ENCODE measurements at regions of chr18 and their contacts with region 1.

Region 1: GRCh38 chr18:74251297-74252038 is 40.3 kb downstream of the CYB5A start:
- DNase-seq: no peak
- ATAC-seq: peak in 1 of 4 donors; percentile 37
- H3K4me3 ChIP-seq: no peak overlapping the region
- H3K27ac ChIP-seq: peak overlapping the region in 2 of 12 donors; percentile 72 to 77
- H3K4me1 ChIP-seq: peaks cover 2 to 33% (median 24%) of the 10 kb centered on the region in 12 donors
- H3K27me3 ChIP-seq: no peaks in the 10 kb centered on the region
- CTCF ChIP-seq: no peak
- POLR2A ChIP-seq: no peak

Region 2: GRCh38 chr18:74291771-74292540 is 40.5 kb after region 1 on chr18 and contains the start of gene CYB5A:
- intact Hi-C with region 1: loop called in 3 of 10 experiments (anchors 5 to 10 kb)
- DNase-seq: peak; percentile 98 to 99 (median 99)
- ATAC-seq: peak; percentile 99 to 100 (median 99)
- H3K4me3 ChIP-seq: peak within 1 kb of the TSS; percentile 65 to 96 (median 87)
- H3K27ac ChIP-seq: peak within 1 kb of the TSS in 11 of 12 donors; percentile 35 to 89 (median 72)
- H3K4me1 ChIP-seq: peaks cover 0 to 40% (median 22%) of the 10 kb centered on the region in 12 donors
- H3K27me3 ChIP-seq: no peaks in the 10 kb centered on the region
- CTCF ChIP-seq: peak in 2 of 12 donors; percentile 10 to 26
- POLR2A ChIP-seq: peak in 1 of 2 donors; percentile 81
- total RNA-seq, gene CYB5A: 46.5 to 146 (median 83.3) TPM

Region 3: GRCh38 chr18:74331404-74331803 is 79.9 kb after region 1 on chr18:
- intact Hi-C with region 1: loop called in 1 of 10 experiments (anchors 5 kb)
- DNase-seq: no peak
- ATAC-seq: peak in 3 of 4 donors; percentile 61 to 78 (median 72)
- H3K4me3 ChIP-seq: no peak overlapping the region
- H3K27ac ChIP-seq: no peak overlapping the region
- H3K4me1 ChIP-seq: peaks cover 0 to 8% (median 0%) of the 10 kb centered on the region in 12 donors
- H3K27me3 ChIP-seq: no peaks in the 10 kb centered on the region
- CTCF ChIP-seq: peak in 11 of 12 donors; percentile 19 to 53 (median 40)
- POLR2A ChIP-seq: no peak

Measured in heart left ventricle (tissue), 16 donors.